BJ (cell line): ENCODE measurements at regions of chr2 and their contacts with region 1.

Region 1: GRCh38 chr2:38610851-38611801 is 8.4 kb upstream of the HNRNPLL start:
- DNase-seq: no peak
- H3K4me3 ChIP-seq: no peak overlapping the region
- H3K27me3 ChIP-seq: no peaks in the 10 kb centered on the region
- CTCF ChIP-seq: no peak

Region 2: GRCh38 chr2:38653715-38654527 is 42.8 kb after region 1 on chr2:
- CTCF ChIA-PET with region 1: no interaction called
- POLR2A ChIA-PET with region 1: interaction called, 26 read pairs
- DNase-seq: no peak
- H3K4me3 ChIP-seq: no peak overlapping the region
- H3K27me3 ChIP-seq: peaks cover 2% of the 10 kb centered on the region
- CTCF ChIP-seq: no peak